Activated T-helper 1 cell treated with anti-CD3 and anti-CD28 coated beads, Interleukin-12 subunit alpha, Interleukin-12 subunit beta, Interleukin-2, Interleukin-4 antibody, amounts not matched to agents 30 ng/mL and 10 ng/mL and 1 ng/mL, durations not matched to agents 14 hours and 24 hours and 36 hours (primary cell): ENCODE measurements at regions of chr3 and their contacts with region 1.

Region 1: GRCh38 chr3:112519424-112520001 is 20.2 kb upstream of the BTLA start:
- DNase-seq: no peak
- H3K4me3 Mint-ChIP-seq: no peak overlapping the region
- H3K27ac Mint-ChIP-seq: peak overlapping the region; percentile 4
- H3K4me1 Mint-ChIP-seq: peaks cover 35% of the 10 kb centered on the region
- H3K27me3 Mint-ChIP-seq: no peaks in the 10 kb centered on the region

Region 2: GRCh38 chr3:112136959-112137693 is 382.4 kb before region 1 on chr3:
- intact Hi-C with region 1: loop called (anchors 1 kb)
- DNase-seq: no peak
- H3K4me3 Mint-ChIP-seq: no peak overlapping the region
- H3K27ac Mint-ChIP-seq: peak overlapping the region; percentile 6
- H3K4me1 Mint-ChIP-seq: peaks cover 54% of the 10 kb centered on the region
- H3K27me3 Mint-ChIP-seq: no peaks in the 10 kb centered on the region

Region 3: DNA sequence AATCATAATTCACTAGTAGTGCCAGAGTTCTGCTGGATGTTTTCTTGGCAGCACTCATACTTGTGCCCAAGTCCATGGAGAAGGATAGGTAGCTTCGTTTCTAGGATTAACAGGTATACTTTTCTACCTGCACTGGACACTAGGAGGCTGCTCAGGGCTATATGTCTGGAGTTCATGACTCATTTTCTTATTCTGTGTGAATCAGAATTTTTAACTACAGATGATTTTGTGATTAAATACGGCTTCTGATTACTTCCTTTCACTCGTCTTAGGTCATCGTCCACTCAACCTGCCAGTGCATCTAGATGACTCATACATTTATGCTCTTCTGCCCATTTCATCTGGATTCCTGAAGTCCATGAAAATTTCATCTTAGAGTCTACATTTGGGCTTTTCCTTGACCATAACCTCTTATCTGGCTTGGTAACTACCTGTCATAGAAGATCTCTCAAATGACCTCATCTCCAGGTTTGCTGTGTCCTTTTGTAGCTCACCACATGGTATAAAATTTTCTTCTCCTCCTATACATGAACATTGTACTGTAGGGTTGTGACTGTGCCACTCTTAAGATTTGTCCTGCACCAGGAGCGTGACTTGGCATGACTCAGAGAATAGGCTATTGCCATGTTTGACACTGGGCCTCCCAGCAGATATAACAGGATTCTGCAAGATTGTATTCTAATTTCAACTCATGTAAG is 319.7 kb before region 1 on chr3:
- intact Hi-C with region 1: no loop called
- DNase-seq: no peak
- H3K4me3 Mint-ChIP-seq: no peak overlapping the region
- H3K27ac Mint-ChIP-seq: no peak overlapping the region
- H3K4me1 Mint-ChIP-seq: no peaks in the 10 kb centered on the region
- H3K27me3 Mint-ChIP-seq: no peaks in the 10 kb centered on the region

Region 4: DNA sequence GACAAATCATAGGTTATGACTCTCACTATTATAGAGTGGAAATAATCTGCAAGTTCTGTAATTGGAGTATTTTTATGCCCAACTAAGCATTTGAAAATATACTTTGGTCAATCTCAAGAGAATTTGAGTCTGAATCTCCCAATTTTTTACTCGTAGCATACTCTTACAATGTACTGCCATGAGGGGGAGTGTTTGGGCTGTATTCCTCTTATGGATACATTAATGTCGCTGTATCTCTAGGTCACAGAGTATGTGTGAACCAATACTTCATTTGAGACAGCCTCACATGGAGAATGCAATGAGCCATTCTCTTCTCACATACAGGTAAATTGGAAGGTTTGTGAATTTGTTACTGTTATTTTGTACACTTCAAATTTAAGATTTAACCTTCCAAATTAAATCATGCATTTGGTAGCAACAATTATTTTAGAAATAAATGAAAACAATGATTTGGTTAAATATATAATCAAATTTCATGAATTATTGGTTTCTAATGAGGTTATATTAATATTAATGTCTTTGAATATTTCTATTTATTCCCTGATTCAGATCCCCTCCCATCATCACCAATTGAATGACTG is 192.1 kb before region 1 on chr3:
- intact Hi-C with region 1: loop called (anchors 1 kb)
- DNase-seq: peak; percentile 38
- H3K4me3 Mint-ChIP-seq: no peak overlapping the region
- H3K27ac Mint-ChIP-seq: no peak overlapping the region
- H3K4me1 Mint-ChIP-seq: no peaks in the 10 kb centered on the region
- H3K27me3 Mint-ChIP-seq: peaks cover 1% of the 10 kb centered on the region

Region 5: GRCh38 chr3:112437146-112438022 is 82.1 kb before region 1 on chr3:
- intact Hi-C with region 1: loop called (anchors 1 kb)
- DNase-seq: peak; percentile 30
- H3K4me3 Mint-ChIP-seq: no peak overlapping the region
- H3K27ac Mint-ChIP-seq: peak overlapping the region; percentile 75
- H3K4me1 Mint-ChIP-seq: peaks cover 67% of the 10 kb centered on the region
- H3K27me3 Mint-ChIP-seq: no peaks in the 10 kb centered on the region

Region 6: GRCh38 chr3:112489674-112490479 is 29.6 kb before region 1 on chr3:
- intact Hi-C with region 1: loop called (anchors 1 kb)
- DNase-seq: no peak
- H3K4me3 Mint-ChIP-seq: peak overlapping the region; percentile 72
- H3K27ac Mint-ChIP-seq: peak overlapping the region; percentile 91
- H3K4me1 Mint-ChIP-seq: peaks cover 64% of the 10 kb centered on the region
- H3K27me3 Mint-ChIP-seq: no peaks in the 10 kb centered on the region